ENCODE measurements at regions of chr4 and their contacts with region 1.

Region 1: DNA sequence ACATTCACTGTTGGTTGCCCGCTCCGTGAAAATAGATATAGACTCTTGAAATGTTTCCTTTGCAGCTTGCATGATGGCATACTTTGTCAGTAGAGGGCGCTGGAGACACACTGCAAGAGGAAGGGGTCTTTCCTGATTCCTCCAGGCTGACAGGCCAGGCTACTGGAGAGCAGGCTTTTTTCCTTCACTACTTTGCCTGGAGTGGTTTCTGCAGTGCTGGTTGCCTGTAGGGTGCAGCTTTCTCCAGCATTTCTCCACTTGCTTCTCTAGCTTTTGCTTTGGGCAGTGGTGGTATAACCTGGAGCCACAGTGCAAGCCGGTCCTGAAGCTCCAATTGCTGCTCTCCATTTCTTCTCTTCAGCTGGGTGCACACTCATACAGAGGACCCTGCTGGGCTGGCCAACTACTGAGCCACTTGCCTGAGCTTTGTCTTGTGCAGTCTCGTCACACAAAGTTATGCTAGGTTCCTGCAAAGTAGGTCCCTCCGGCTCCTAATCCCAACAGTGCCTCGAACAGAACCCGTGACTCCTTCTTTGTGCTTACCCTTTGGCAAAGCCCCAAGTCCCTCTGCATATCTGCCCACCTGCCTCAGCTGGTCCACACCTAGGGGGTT is 46.3 kb downstream of the RASSF6 start:
- DNase-seq: peak; percentile 75
- H3K4me3 ChIP-seq: no peak overlapping the region
- H3K27ac ChIP-seq: no peak overlapping the region
- H3K27me3 ChIP-seq: peaks cover 3% of the 10 kb centered on the region
- CTCF ChIP-seq: peak; percentile 99

Region 2: DNA sequence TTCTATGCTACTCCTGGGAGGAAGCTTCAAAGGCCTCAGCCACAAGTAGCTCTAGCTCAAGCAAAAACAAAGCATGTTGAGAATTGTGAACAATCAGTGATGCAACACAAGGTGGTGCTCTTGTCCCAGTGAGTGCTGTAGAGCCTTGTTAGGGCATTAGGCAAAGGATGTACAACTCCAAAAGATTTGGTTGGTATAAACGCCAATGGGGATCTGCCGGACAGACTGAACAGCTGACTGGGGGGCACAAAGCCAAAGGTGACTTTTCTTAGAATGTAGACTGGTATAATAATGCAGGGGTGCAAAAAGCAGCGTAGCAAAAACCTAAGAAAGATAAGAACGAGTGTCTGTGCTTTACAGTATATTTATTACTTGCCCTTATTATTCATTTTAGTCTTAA is 232.4 kb before region 1 on chr4:
- CTCF ChIA-PET with region 1: interaction called, 13 read pairs
- POLR2A ChIA-PET with region 1: no interaction called
- DNase-seq: peak; percentile 4
- H3K4me3 ChIP-seq: no peak overlapping the region
- H3K27ac ChIP-seq: no peak overlapping the region
- H3K27me3 ChIP-seq: no peaks in the 10 kb centered on the region
- CTCF ChIP-seq: peak; percentile 61

Region 3: DNA sequence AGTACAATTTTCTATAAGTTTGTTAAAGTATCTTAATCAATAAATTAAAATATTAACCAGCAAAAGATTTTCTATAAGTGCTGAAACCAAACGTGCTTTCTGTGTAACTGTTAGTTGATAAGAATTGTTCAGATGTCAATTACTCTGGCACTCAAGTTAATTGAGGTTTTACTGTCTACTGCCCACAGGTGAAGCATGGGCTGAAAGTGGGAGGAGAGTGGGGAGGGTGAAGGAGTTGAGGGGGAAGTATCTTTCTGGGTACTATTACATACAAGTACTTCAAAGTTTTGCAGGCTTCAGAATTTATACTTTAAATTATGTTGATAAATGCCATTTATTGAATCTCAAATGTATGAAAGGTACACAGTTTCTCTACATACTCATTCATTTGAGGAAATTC is 483.7 kb after region 1 on chr4:
- CTCF ChIA-PET with region 1: no interaction called
- POLR2A ChIA-PET with region 1: no interaction called
- DNase-seq: no peak
- H3K4me3 ChIP-seq: no peak overlapping the region
- H3K27ac ChIP-seq: no peak overlapping the region
- H3K27me3 ChIP-seq: no peaks in the 10 kb centered on the region
- CTCF ChIP-seq: no peak

Measured in AG04450 (cell line).